ENCODE measurements at regions of chr1 and their contacts with region 1.

Region 1: DNA sequence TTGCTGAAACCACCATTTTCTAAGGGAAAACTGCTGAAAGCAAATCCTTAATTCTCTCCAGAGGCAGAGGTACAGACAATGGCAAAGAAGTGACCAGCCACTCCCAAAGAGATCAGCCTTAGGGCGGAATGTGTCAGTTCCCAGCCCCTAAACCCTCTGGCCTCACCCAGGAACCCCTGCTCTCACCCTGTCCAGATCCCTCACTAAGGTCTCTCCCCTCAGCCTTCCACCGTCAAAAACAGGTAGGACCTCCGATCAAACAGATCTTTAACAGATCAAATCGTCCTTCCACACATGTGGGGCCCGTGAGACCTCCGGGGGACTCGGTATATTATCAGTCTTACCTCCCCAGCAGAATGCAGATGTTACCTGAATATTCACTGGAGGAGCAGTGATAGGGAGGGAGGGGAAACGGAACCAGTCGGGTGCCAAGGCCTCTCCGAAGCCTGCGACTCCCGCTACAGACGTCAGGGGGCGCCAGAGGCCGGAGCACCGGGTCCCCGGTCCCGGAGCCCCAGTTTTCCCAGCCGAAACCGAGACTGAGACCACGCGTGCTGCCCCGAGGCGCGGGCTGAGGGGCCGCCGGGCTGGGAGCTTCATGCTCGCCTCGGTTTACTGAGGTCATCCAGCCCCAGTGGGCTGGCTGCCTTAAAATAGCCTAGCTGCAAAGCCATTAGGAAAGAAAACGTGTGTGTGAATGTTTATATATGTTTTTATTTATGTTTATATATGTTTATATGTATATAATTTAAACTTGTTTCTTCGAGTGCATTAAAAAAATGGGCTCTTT is 23.6 kb downstream of the GPA33 start:
- DNase-seq: peak; percentile 66

Region 2: GRCh38 chr1:166910396-166910994 is 156.0 kb before region 1 on chr1:
- in situ Hi-C with region 1: loop called (anchors 25 kb)
- DNase-seq: peak; percentile 95

Region 3: GRCh38 chr1:167330601-167331293 is 264.2 kb after region 1 on chr1:
- in situ Hi-C with region 1: no loop called
- DNase-seq: no peak

Region 4: GRCh38 chr1:167342846-167343245 is 276.3 kb after region 1 on chr1:
- in situ Hi-C with region 1: no loop called
- DNase-seq: peak; percentile 46

Measured in ACHN (cell line).